ENCODE measurements at regions of chr4 and their contacts with region 1.

Region 1: GRCh38 chr4:83012687-83013419 is 2.2 kb upstream of the LIN54 start:
- DNase-seq: peak; percentile 97
- ATAC-seq: peak; percentile 81
- H3K4me3 Mint-ChIP-seq: peak overlapping the region; percentile 80
- H3K27ac Mint-ChIP-seq: peak overlapping the region; percentile 89
- H3K4me1 Mint-ChIP-seq: peaks cover 30% of the 10 kb centered on the region
- H3K27me3 Mint-ChIP-seq: no peaks in the 10 kb centered on the region

Region 2: GRCh38 chr4:82900331-82901128 is 112.3 kb before region 1 on chr4 and contains the start of gene THAP9:
- CTCF ChIA-PET with region 1: interaction called, 20 read pairs
- POLR2A ChIA-PET with region 1: interaction called, 12 read pairs
- DNase-seq: peak; percentile 99
- ATAC-seq: peak; percentile 91
- H3K4me3 Mint-ChIP-seq: no peak within 1 kb of the TSS
- H3K27ac Mint-ChIP-seq: no peak within 1 kb of the TSS
- H3K4me1 Mint-ChIP-seq: peaks cover 45% of the 10 kb centered on the region
- H3K27me3 Mint-ChIP-seq: no peaks in the 10 kb centered on the region
- total RNA-seq, gene THAP9: 3.1 to 3.3 TPM

Region 3: DNA sequence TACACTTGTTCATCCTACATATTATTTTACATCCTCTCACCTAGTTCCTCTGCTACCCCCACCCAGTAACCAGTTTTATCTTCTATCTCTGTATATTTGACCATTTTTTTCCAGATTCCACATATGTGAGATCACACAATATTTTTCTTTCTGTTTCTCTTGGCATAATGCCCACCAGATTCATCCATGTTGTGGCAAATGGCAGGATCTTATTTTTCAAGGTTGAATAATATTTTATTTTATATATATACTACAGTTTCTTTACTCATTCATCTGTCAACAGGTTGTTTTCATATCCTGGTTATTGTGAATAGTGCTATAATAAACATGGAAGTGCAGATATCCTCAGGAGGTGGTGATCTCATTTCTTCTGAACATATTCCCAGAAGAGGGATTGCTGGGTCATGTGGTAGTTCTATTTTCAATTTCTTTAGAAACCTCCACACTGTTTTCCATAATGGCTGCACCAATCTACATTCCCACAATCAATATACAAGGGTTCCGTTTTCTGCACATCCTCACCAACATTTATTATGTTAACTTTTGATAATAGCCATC is 64.1 kb before region 1 on chr4:
- CTCF ChIA-PET with region 1: no interaction called
- POLR2A ChIA-PET with region 1: no interaction called
- DNase-seq: no peak
- ATAC-seq: no peak
- H3K4me3 Mint-ChIP-seq: no peak overlapping the region
- H3K27ac Mint-ChIP-seq: no peak overlapping the region
- H3K4me1 Mint-ChIP-seq: no peaks in the 10 kb centered on the region
- H3K27me3 Mint-ChIP-seq: no peaks in the 10 kb centered on the region

Region 4: DNA sequence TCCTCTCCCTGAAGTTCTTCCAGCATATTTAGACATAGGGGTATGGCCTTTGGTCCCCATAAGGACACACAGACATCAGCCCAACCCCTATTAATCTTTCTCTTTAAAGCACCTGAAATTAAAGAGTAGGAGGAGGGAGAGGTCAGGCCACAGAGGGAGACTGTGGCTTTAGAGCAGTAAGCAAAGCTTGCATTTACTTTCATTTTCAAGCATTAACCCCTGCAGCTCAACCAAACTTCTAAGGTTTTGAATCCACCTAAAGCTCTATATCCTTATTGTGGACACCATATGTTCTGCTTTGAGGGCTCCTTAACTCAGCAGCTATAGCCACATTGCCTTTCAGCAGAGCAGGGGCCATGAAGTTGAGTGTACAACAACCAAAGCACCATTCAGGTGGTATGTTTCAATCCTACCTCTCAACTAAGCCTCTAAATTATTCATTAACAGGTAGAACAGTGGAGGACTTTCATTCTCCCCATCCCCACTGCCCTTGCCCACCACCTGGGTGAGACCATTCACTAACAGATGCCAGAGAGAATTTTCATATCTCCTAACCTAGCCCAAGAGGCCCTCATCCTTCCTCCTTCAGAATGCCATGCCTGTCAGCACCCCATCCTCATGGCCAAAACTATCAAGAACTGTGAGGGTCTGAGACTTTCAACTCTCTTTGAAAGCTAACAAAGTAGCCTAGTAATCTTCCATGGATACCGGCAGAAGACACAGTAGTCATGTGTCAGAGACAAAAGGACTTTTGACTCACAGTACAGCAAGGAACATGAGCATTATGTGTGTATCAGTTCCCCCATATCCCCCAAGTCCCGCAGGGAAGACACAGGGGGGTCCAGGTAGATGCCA is 23.1 kb before region 1 on chr4:
- CTCF ChIA-PET with region 1: interaction called, 3 read pairs
- POLR2A ChIA-PET with region 1: interaction called, 14 read pairs
- DNase-seq: peak; percentile 60
- ATAC-seq: peak; percentile 89
- H3K4me3 Mint-ChIP-seq: peak overlapping the region; percentile 36
- H3K27ac Mint-ChIP-seq: peak overlapping the region; percentile 74
- H3K4me1 Mint-ChIP-seq: peaks cover 29% of the 10 kb centered on the region
- H3K27me3 Mint-ChIP-seq: no peaks in the 10 kb centered on the region

Region 5: DNA sequence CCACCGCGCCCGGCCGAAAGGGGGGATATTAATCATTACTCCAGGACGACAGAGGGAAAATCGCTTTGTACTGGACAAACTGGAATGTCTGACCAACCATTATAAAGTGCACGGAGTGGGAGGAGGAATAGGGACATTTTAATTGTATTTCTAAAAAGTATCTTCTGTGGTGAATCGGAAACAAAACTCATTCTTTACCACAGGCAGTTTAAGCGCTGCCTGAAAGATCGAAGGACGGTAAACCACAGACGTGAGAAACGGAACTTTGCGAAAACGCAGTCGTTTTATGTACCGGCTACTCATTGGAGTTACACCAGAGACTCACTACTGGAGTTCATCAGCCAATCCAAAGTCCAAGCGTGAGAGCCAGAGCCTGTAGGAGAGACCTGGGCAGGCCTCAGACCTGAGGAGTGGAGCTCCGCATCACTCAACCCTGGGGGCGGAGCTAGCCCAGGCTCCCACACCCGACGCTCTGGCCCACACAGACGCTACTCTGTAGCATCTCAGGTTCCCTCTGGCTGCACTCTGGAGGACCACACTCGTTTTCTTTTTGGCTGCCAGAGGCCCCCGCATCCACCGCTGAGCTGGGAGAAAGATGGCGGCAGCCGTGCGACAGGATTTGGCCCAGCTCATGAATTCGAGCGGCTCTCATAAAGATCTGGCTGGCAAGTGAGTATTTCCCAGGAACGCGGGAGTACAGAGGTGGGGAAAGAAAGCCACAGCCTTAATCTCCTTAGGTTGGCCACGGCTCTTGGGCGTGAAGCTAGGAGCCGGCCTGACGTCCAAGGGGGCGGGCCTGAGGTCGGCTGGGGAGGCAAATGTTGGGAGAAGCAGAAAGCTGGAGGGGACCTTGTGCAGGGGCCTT is 22.0 kb after region 1 on chr4 and contains the start of gene COPS4:
- CTCF ChIA-PET with region 1: interaction called, 34 read pairs
- POLR2A ChIA-PET with region 1: interaction called, 63 read pairs
- DNase-seq: peak; percentile 98
- ATAC-seq: peak; percentile 99
- H3K4me3 Mint-ChIP-seq: peak within 1 kb of the TSS; percentile 91
- H3K27ac Mint-ChIP-seq: peak within 1 kb of the TSS; percentile 98
- H3K4me1 Mint-ChIP-seq: peaks cover 24% of the 10 kb centered on the region
- H3K27me3 Mint-ChIP-seq: peaks cover 5% of the 10 kb centered on the region
- total RNA-seq, gene COPS4: 33.7 to 34.6 TPM

Region 6: GRCh38 chr4:83071116-83071515 is 58.3 kb after region 1 on chr4:
- CTCF ChIA-PET with region 1: no interaction called
- POLR2A ChIA-PET with region 1: no interaction called
- DNase-seq: no peak
- ATAC-seq: no peak
- H3K4me3 Mint-ChIP-seq: no peak overlapping the region
- H3K27ac Mint-ChIP-seq: no peak overlapping the region
- H3K4me1 Mint-ChIP-seq: peaks cover 10% of the 10 kb centered on the region
- H3K27me3 Mint-ChIP-seq: no peaks in the 10 kb centered on the region

Region 7: DNA sequence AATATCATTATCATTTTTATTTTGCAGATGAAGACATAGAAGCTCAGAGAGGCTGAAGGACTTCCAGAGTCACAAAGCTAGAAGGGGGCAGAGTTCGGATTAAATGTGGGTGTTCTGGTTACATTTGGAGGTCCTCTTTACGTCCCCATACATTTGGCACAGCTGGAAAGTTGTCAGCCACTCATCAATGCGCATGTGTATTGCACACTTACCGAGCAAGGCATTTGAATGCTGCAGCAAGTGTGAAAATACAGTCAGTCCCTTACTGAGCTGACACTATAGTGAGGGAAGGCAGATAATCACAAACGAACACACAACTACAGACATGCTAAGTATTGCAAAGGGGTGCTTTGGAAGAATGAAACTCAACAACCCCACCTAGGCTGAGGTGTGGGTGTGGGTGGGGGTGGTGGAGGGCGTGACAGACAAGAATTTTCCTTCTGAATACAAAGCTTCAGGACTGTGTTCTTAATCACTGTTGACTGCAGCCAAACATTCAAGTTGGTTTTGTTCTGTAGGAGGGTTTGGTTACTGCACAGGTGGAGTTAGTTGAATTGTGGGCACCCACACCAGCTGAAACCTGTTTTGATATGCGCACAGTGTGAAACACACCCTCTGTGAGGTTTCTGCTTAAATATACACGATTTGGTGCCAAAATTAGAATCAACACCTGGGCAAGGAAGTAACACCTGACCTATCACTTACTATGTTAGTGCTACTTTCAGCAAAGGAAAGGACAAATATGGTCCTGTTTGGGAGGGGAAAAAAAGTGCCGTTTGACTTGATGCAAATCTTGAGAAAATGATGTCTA is 199.4 kb after region 1 on chr4:
- CTCF ChIA-PET with region 1: no interaction called
- POLR2A ChIA-PET with region 1: no interaction called
- DNase-seq: peak; percentile 77
- ATAC-seq: peak; percentile 86
- H3K4me3 Mint-ChIP-seq: peak overlapping the region; percentile 52
- H3K27ac Mint-ChIP-seq: peak overlapping the region; percentile 91
- H3K4me1 Mint-ChIP-seq: peaks cover 68% of the 10 kb centered on the region
- H3K27me3 Mint-ChIP-seq: no peaks in the 10 kb centered on the region